ENCODE measurements at regions of chr7 and their contacts with region 1.

Region 1: GRCh38 chr7:332646-333392 is 42.8 kb downstream of the FOXL3 start:
- DNase-seq: peak; percentile 79
- CTCF ChIP-seq: peak; percentile 63

Region 2: DNA sequence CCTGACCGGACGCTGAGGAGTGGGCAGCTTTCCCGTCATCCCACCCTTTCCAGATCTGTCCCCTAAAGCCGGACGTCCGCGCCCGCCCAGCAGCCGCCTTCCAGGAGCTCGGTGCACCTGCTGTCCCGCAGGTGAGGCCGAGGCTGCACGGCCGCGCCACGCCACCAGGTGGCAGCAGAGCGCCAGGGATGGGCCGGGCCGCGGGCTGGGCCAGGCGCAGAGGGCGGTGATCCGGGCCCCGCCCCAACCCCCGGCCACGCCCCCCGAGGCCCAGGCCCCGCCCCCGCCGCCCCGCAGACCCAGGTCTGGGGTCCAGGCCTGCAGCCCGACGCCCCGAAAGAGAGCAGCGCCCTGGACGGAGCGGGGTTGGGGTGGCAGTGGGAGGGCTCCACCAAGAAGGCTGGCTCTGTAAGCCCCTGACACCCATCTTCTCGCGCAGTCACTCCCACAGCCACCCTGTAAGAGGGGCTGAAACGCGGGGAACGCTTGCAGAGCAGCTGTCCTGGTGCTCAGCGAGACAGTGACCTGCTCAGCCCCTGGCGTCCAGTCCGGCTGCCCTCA is 10.6 kb before region 1 on chr7:
- CTCF ChIA-PET with region 1: interaction called, 11 read pairs
- POLR2A ChIA-PET with region 1: no interaction called
- DNase-seq: peak; percentile 94
- CTCF ChIP-seq: peak; percentile 95

Region 3: DNA sequence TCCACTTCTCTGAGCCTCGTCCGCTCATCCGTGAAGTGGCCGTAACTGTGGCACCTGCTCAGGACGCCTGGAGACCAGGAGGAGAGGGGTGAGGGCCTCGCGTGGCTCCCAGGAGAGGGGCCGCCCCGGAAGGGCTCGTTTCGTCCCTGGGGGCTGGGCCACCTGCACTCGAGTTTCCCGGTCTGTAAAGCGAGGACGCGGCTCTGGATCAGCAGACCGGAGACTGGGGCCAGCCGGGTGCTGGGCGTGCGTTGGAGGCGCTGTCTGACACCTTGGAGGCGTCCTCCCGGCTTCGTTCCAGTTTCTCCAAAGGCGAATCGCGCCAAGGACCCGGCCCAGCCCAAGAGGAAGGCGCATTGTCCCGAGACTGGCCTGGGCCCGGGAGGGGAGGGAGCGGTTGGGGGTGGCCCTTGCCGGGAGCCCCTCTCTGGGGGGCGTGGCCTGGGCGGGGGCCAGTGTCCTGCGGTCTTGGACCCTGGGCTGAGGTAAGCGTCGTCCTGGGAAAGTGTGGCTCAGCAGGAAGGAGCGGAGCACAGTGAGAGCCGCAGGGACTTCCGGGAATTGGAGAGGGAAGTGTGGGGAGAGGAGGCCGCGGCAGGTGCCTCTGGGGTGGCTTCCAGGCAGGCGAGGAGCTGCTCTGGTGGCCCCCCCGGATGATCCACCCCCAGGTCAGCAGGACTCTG is 46.8 kb after region 1 on chr7:
- CTCF ChIA-PET with region 1: no interaction called
- POLR2A ChIA-PET with region 1: no interaction called
- DNase-seq: no peak
- CTCF ChIP-seq: no peak